H1 (cell line): ENCODE measurements at regions of chr20 and their contacts with region 1.

Region 1: DNA sequence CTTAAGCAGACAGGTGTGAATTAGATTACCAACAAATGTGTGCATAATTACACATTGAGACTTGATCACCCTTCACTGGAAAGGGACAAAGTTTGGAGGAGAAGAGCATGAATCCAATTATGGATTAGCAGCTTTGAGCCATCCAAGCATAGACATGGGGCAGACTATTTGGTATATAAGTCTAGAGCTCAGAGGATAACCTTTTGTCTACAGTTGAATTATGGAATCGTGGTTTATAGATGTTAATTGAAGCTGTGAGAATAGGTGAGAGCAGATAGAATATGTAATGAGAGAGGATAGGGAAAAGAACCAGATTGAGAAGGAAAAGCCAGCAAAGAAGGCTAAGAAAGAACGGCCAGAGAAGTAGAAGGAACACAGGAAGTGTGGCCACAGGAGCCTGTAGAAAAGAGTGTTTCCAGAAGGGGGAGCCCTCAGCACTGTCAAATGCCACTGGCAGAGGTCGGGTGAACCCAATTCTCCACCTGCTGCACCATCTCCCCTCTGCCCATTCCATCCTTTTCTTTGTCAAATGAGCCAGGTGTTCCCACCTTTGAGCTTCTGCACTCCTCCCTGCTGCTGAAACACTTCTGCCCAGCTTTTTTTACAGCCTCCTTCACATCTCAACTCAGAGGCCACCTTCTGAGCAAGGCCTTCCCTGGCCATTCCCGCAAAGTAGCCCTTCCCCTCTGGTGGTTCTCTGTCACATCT is 7.3 kb downstream of the DNTTIP1 start:
- DNase-seq: peak; percentile 36 to 81
- H3K4me3 ChIP-seq: no peak overlapping the region
- H3K27ac ChIP-seq: no peak overlapping the region
- H3K4me1 ChIP-seq: no peaks in the 10 kb centered on the region; a peak in 1 of 7 replicates
- H3K27me3 ChIP-seq: no peaks in the 10 kb centered on the region
- CTCF ChIP-seq: peak; percentile 67 to 90 (median 82)
- EP300 ChIP-seq: no peak
- POLR2A ChIP-seq: no peak
- RAD21 ChIP-seq: peak; percentile 68 to 83

Region 2: GRCh38 chr20:45812157-45813020 is 13.3 kb after region 1 on chr20 and contains the start of gene UBE2C:
- CTCF ChIA-PET with region 1: interaction called, 13 read pairs
- POLR2A ChIA-PET with region 1: interaction called, 90 read pairs
- DNase-seq: peak; percentile 96 to 99
- H3K4me3 ChIP-seq: peak within 1 kb of the TSS; percentile 91 to 100 (median 98)
- H3K27ac ChIP-seq: peak within 1 kb of the TSS; percentile 74; the same call in 1 of the 2 replicates
- H3K4me1 ChIP-seq: peaks cover 0 to 4% (median 2%) of the 10 kb centered on the region in 4 experiments; a peak in 3 of 7 replicates
- H3K27me3 ChIP-seq: no peaks in the 10 kb centered on the region
- CTCF ChIP-seq: no peak
- EP300 ChIP-seq: no peak
- POLR2A ChIP-seq: peak; percentile 47 to 64; a peak in 2 of 3 replicates
- RAD21 ChIP-seq: no peak
- total RNA-seq, gene UBE2C: 243 and 255 TPM in 2 replicates

Region 3: GRCh38 chr20:45817652-45818194 is 18.6 kb after region 1 on chr20:
- CTCF ChIA-PET with region 1: interaction called, 13 read pairs
- POLR2A ChIA-PET with region 1: interaction called, 90 read pairs
- DNase-seq: no peak
- H3K4me3 ChIP-seq: no peak overlapping the region
- H3K27ac ChIP-seq: no peak overlapping the region
- H3K4me1 ChIP-seq: peaks cover 0 to 4% (median 2%) of the 10 kb centered on the region in 4 experiments; a peak in 3 of 7 replicates
- H3K27me3 ChIP-seq: no peaks in the 10 kb centered on the region
- CTCF ChIP-seq: no peak
- EP300 ChIP-seq: no peak
- POLR2A ChIP-seq: no peak
- RAD21 ChIP-seq: no peak

Region 4: DNA sequence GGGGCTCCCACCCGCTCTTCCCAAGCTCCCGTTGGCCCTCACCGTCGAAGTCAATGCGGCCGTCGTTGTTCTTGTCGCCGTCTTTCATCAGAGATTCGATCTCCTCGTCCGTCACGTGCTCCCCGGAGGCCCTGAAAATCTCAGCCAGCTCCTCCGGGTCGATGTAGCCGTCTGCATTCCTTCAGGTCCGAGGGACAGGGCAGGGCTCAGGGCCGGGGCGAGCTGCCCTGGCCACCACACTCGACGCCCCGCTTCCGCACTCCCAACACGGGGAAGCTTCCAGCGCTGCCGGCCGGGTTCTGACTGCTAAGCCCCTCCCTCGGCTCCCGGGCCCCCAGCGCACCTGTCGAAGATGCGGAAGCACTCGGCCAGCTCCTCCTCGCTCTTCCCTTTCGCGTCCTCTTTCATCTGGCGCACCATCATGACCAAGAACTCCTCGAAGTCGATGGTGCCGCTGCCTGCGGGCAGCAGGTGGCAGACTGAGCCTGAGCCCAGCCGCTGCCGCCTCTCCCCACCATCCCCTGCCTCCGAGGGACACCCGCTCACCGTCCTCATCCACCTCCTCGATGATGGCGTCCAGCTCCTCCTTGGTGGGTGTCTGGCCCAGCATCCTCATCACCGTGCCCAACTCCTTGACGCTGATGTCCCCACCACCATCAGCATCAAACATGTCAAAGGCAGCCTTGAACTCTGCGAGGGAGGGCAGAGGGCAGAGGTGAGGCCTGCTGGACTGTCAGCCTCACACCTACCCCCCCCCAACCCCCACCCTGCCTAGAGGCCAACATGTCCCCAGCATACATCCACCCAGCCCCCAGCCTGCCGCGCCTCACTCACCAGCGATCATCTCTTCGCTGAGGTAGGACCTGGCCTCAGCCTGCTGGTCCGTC is 25.1 kb after region 1 on chr20:
- CTCF ChIA-PET with region 1: interaction called, 13 read pairs
- POLR2A ChIA-PET with region 1: interaction called, 90 read pairs
- DNase-seq: peak; percentile 53 to 77
- H3K4me3 ChIP-seq: peak overlapping the region in 3 of 4 experiments; percentile 5 to 44 (median 6); a peak in 4 of 8 replicates
- H3K27ac ChIP-seq: no peak overlapping the region
- H3K4me1 ChIP-seq: peaks cover 0 to 12% (median 5%) of the 10 kb centered on the region in 4 experiments; a peak in 6 of 7 replicates
- H3K27me3 ChIP-seq: peaks cover 0 to 12% (median 10%) of the 10 kb centered on the region in 4 experiments; a peak in 4 of 7 replicates
- CTCF ChIP-seq: peak; percentile 58 to 78 (median 72)
- EP300 ChIP-seq: no peak
- POLR2A ChIP-seq: 0 out of 3 replicates have a peak, but pooled peaks of 1 of the 2 experiments have one; percentile 42
- RAD21 ChIP-seq: peak; percentile 74 to 77

Region 5: GRCh38 chr20:45872648-45873047 is 73.6 kb after region 1 on chr20:
- CTCF ChIA-PET with region 1: no interaction called
- POLR2A ChIA-PET with region 1: no interaction called
- DNase-seq: no peak
- H3K4me3 ChIP-seq: no peak overlapping the region
- H3K27ac ChIP-seq: no peak overlapping the region
- H3K4me1 ChIP-seq: no peaks in the 10 kb centered on the region
- H3K27me3 ChIP-seq: no peaks in the 10 kb centered on the region
- CTCF ChIP-seq: no peak
- EP300 ChIP-seq: no peak
- POLR2A ChIP-seq: no peak
- RAD21 ChIP-seq: no peak